A549 (cell line): ENCODE measurements at regions of chr1 and their contacts with region 1.

Region 1: DNA sequence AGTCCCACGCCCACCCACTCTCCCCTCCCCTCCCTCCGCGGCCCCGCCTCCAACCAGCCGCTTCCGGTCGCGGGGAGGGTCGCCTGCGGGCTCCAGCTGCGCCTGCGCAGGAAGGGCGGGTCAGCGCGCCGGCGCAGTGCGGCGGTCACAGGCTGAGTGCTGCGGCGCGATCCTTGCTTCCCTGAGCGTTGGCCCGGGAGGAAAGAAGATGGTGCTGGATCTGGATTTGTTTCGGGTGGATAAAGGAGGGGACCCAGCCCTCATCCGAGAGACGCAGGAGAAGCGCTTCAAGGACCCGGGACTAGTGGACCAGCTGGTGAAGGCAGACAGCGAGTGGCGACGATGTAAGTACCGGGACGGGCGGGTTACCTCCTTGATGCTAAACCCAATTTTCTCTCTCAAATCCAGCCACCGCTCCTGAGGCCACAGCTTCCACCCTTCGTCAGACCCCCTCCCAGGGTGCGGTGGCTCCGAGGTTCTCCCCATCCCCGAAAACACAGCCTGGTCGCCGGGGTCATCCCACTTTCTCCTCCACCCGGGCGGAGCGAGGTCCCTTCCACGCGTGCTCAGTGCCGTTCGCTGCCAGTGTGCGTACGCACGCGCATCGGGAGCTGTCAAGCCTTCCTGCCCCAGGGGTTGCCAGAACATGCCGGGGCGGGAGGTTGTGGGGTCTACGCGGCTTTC is at the start of gene SARS1:
- DNase-seq: peak; percentile 79 to 81
- ATAC-seq: peak; percentile 90 to 95
- H3K4me3 ChIP-seq: peak within 1 kb of the TSS; percentile 82
- H3K27ac ChIP-seq: peak within 1 kb of the TSS; percentile 89 to 96
- H3K4me1 ChIP-seq: peaks cover 25% of the 10 kb centered on the region
- CTCF ChIP-seq: no peak
- EP300 ChIP-seq: no peak
- POLR2A ChIP-seq: peak; percentile 64
- RAD21 ChIP-seq: no peak
- polyA plus RNA-seq, gene SARS1: 152 and 158 TPM in 2 replicates

Region 2: GRCh38 chr1:109099938-109100773 is 113.8 kb before region 1 on chr1:
- CTCF ChIA-PET with region 1: interaction called, 12 read pairs
- POLR2A ChIA-PET with region 1: interaction called, 8 read pairs
- DNase-seq: peak; percentile 80 to 97
- ATAC-seq: peak; percentile 97 to 98
- H3K4me3 ChIP-seq: peak overlapping the region; percentile 93
- H3K27ac ChIP-seq: peak overlapping the region; percentile 93 to 94
- H3K4me1 ChIP-seq: peaks cover 9% of the 10 kb centered on the region
- CTCF ChIP-seq: peak; percentile 62
- EP300 ChIP-seq: no peak
- POLR2A ChIP-seq: peak; percentile 98
- RAD21 ChIP-seq: peak; percentile 36 to 53; a peak in 4 of 5 replicates

Region 3: GRCh38 chr1:109170035-109170764 is 43.7 kb before region 1 on chr1:
- CTCF ChIA-PET with region 1: no interaction called
- POLR2A ChIA-PET with region 1: interaction called, 10 read pairs
- DNase-seq: no peak
- ATAC-seq: no peak
- H3K4me3 ChIP-seq: no peak overlapping the region
- H3K27ac ChIP-seq: no peak overlapping the region
- H3K4me1 ChIP-seq: no peaks in the 10 kb centered on the region
- CTCF ChIP-seq: no peak
- EP300 ChIP-seq: no peak
- POLR2A ChIP-seq: no peak
- RAD21 ChIP-seq: no peak

Region 4: DNA sequence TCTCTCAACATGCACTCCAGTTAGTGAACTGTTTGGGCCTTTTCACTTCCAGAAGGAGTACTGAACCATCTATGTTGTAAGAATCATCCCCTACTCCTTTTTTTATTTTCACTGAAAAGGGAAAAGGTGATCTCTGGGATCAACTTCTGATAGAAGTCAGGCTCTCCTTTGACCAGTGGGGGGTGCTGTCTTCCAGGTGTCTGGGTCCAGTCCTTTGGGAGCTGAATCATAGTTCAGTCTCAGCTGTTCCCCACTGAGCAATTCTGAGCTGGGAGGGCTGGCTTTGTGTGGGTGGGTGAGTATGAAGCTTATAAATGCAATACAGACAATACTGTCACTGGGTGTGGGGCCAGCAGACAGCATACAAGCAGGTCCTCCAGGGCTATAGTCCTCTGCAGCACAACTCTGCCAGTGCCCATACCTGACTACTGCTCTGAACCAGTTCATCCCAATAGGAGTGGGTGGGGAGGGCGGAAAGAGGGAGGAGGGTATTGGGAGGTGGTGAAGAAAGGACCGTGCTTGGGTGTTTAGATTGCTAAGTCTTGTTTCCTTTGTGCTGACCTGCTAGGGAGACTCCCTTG is 12.7 kb before region 1 on chr1:
- CTCF ChIA-PET with region 1: interaction called, 12 read pairs
- POLR2A ChIA-PET with region 1: interaction called, 8 read pairs
- DNase-seq: peak; percentile 36 to 49
- ATAC-seq: peak in 1 of 2 experiments; percentile 35; a peak in 3 of 6 replicates
- H3K4me3 ChIP-seq: no peak overlapping the region
- H3K27ac ChIP-seq: peak overlapping the region in 1 of 2 experiments; percentile 62; a peak in 3 of 6 replicates
- H3K4me1 ChIP-seq: peaks cover 30% of the 10 kb centered on the region
- CTCF ChIP-seq: peak; percentile 53
- EP300 ChIP-seq: no peak
- POLR2A ChIP-seq: no peak
- RAD21 ChIP-seq: peak; percentile 46 to 53; a peak in 4 of 5 replicates